Activated T-helper 2 cell treated with anti-CD3 and anti-CD28 coated beads, Interferon-gamma antibody, Interleukin-2, Interleukin-4, amounts not matched to agents 10 μg/mL and 5 μg/mL and 100 μg/mL, durations not matched to agents 14 hours and 24 hours and 36 hours (primary cell): ENCODE measurements at regions of chr6 and their contacts with region 1.

Region 1: DNA sequence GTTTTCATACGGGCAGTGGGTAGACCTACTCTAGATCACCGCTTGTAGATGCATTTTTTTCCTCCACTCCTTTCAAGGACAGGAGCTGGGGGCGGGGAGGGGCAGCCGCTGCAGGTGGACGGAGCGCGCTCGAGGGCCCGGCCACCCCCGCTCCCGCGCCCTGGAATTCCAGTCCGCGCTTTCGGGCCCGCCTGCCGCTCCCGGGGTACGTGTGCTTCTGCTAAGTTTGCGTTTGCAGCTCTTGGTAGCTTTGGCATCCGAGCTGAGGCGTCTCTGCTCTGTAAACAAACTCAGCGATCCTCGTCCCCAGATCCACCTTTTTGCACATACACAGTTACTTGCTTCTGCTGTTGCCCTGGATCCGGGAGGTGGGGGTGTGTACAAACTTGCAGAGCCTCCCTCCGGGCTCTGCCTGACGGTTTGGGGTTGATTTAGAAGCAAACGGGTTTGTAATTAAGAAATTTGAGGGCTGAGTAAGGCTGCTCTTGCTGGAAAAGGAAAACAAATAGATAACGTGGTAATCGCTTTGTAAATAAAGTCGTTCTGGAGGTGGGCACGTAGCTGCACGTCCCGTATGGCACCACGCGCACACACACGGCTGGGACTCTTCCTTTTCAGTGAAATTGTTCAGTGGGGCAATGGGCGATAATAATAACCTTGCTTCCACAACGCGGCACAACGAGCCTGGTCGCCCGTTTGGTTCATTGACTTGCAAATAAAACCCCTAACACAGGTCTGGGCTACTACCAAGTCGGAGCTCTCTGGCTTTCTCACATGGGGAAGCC is 976 bp upstream of the CITED2 start:
- DNase-seq: peak; percentile 83
- H3K4me3 Mint-ChIP-seq: peak overlapping the region; percentile 92
- H3K27ac Mint-ChIP-seq: peak overlapping the region; percentile 98
- H3K4me1 Mint-ChIP-seq: peaks cover 40% of the 10 kb centered on the region
- H3K27me3 Mint-ChIP-seq: no peaks in the 10 kb centered on the region

Region 2: DNA sequence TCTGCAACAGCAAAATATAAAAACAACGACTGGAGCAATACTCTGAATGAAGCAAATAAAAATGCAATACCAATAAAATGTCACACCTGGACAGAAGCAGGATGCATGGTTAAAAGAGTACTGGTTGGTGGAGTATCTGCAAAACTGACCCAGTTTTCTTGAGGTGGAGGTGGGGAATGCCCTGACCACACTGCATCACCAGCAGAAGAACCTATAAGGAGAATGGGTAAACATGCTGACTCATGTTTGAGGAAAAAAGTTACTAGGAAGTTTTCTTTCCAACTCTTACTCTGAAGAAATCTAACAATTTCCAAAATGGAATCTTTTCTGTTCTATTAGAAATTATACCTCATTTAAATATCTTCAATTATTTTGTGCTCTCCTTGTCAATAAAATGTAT is 431.0 kb before region 1 on chr6:
- intact Hi-C with region 1: loop called (anchors 2 kb)
- DNase-seq: no peak
- H3K4me3 Mint-ChIP-seq: no peak overlapping the region
- H3K27ac Mint-ChIP-seq: no peak overlapping the region
- H3K4me1 Mint-ChIP-seq: peaks cover 46% of the 10 kb centered on the region
- H3K27me3 Mint-ChIP-seq: no peaks in the 10 kb centered on the region

Region 3: GRCh38 chr6:139028658-139029469 is 346.6 kb before region 1 on chr6 and contains the start of gene ABRACL:
- intact Hi-C with region 1: loop called (anchors 1 kb)
- DNase-seq: peak; percentile 77
- H3K4me3 Mint-ChIP-seq: peak within 1 kb of the TSS; percentile 93
- H3K27ac Mint-ChIP-seq: peak within 1 kb of the TSS; percentile 89
- H3K4me1 Mint-ChIP-seq: peaks cover 17% of the 10 kb centered on the region
- H3K27me3 Mint-ChIP-seq: no peaks in the 10 kb centered on the region
- total RNA-seq, gene ABRACL: 151 and 161 TPM in 2 replicates

Region 4: DNA sequence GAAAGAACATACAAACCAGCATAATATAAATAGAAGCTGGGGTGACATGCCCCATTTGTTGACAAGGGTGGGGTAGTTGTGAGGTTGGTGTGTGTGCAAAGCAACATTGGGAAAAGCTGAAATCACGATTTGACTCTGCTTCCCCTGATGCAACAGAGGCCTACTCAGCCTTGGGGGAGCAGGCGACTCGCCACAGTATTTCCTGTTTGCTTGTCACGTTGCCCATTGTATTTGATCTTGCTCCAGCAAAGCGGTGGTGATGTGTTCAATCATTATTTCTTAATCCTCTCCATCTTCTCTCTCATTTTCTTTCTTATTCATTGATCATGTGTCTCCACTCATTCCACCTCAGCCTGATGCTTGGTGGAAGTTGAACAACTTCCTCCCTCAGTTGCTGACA is 164.9 kb after region 1 on chr6:
- intact Hi-C with region 1: loop called (anchors 2 kb)
- DNase-seq: peak; percentile 50
- H3K4me3 Mint-ChIP-seq: no peak overlapping the region
- H3K27ac Mint-ChIP-seq: peak overlapping the region; percentile 77
- H3K4me1 Mint-ChIP-seq: peaks cover 56% of the 10 kb centered on the region
- H3K27me3 Mint-ChIP-seq: no peaks in the 10 kb centered on the region

Region 5: DNA sequence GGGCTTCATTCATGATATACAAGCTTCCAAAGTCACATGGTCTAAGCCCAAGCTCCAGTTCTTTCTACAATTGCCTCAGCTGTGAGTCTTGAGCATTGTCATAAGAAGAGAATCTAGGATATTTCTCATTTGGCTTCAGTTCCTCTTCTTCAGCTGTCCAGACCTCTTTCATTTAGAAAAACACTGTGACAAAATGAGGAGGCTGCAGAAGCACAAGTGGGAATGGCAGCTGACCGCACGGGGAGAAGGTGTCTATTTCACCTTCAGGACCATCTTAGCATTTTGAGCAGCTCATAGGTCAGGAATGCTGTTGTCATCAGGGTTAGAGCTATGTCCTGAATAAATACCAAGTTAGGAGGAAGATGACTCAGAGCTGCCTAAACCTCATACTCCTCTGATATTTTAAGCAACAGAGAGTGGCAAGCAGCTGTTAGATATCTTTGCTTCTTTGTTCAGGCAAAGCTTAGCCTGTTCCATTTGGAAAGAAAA is 389.1 kb after region 1 on chr6:
- intact Hi-C with region 1: loop called (anchors 5 kb)
- DNase-seq: no peak
- H3K4me3 Mint-ChIP-seq: no peak overlapping the region
- H3K27ac Mint-ChIP-seq: peak overlapping the region; percentile 56
- H3K4me1 Mint-ChIP-seq: peaks cover 31% of the 10 kb centered on the region
- H3K27me3 Mint-ChIP-seq: no peaks in the 10 kb centered on the region

Region 6: DNA sequence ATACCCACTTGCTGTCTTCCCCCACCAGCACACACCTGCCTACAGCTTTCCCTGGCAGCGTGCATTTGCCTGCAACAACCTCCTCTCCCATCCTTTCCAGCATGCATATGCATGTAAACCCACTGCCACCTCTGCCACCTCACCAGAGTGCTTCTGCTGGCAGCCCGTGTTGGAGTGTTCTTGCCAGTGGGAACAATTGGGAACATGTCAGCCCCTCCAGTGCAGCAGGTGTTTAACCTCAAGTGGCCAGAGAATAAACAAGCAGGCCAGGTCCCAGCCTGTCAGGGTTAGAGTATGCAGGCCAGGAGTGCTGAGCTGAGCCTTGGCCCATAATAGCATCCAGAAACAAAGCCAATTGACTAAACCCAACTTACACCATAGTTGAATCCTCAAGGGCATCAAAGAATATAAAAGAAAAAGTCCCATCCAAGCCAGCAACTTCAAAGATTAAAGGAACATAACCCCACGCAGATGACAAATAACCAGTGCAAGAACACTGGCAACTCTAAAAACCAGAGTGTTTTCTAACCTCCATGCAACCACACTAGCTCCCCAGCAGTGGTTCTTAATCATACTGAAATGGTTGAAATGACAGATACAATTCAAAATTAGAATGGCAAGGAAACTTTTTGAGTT is 1211.1 kb after region 1 on chr6:
- intact Hi-C with region 1: loop called (anchors 10 kb)
- DNase-seq: peak; percentile 16
- H3K4me3 Mint-ChIP-seq: peak overlapping the region; percentile 43
- H3K27ac Mint-ChIP-seq: peak overlapping the region; percentile 91
- H3K4me1 Mint-ChIP-seq: peaks cover 58% of the 10 kb centered on the region
- H3K27me3 Mint-ChIP-seq: no peaks in the 10 kb centered on the region